Adrenal gland (tissue), 19 donors: ENCODE measurements at regions of chr10 and their contacts with region 1.

Region 1: GRCh38 chr10:96292971-96293920 is 11.0 kb upstream of the DNTT start:
- DNase-seq: peak in 4 of 7 donors; percentile 20 to 31 (median 30)
- H3K4me3 ChIP-seq: no peak overlapping the region
- H3K27ac ChIP-seq: no peak overlapping the region
- H3K4me1 ChIP-seq: no peaks in the 10 kb centered on the region
- H3K27me3 ChIP-seq: no peaks in the 10 kb centered on the region
- CTCF ChIP-seq: peak; percentile 32 to 68 (median 58)
- POLR2A ChIP-seq: no peak

Region 2: DNA sequence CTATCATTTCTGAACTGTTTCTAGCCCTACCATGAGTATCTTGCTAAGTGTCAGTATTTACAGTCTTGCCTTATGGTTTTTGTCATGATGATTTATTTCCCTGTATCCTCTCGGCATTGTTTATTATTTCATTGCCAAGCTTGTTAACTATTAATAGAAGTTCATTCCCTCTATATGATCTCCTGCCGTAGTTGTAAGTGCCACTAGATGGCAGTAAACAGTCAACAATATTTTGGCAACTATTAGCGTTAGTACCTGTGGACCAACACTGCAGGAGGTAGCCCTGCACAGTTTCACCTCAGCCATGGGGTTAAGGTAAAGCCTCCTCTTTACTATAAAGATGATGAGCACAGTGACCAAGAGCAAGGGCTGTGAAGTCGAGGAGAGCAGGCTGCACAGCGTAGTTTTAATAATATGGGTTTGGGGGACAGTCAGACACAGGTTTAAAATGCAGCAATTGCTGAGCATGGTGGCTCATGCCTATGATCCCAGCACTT is 276.0 kb before region 1 on chr10:
- intact Hi-C with region 1: loop called in 1 of 2 experiments (anchors 5 kb)
- DNase-seq: peak in 5 of 7 donors; percentile 18 to 55 (median 31)
- H3K4me3 ChIP-seq: no peak overlapping the region
- H3K27ac ChIP-seq: no peak overlapping the region
- H3K4me1 ChIP-seq: no peaks in the 10 kb centered on the region
- H3K27me3 ChIP-seq: no peaks in the 10 kb centered on the region
- CTCF ChIP-seq: peak; percentile 55 to 80 (median 70)
- POLR2A ChIP-seq: no peak

Region 3: DNA sequence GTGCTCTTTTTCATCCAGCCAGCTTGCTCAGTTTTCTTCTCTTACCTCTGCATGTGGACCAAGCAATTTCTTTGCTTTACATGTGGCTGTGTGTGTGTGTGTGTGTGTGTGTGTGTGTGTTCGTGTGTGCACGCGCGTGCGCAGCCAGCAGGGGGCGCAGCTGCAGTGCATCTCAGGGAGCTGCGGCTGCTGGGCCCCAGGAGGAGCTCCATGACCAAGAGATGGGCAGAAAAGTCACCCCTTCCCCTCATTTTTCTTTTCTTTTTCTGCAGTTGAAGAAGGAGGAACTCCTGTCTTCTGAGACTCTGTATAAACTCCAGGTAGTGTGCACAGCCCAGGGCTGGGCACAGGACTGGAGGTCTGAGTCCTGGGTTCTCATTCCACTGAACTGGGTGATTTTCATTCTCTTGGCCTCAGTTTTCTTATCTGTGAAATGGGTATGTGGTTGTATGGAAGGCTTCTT is 63.6 kb before region 1 on chr10:
- intact Hi-C with region 1: loop called in 1 of 2 experiments (anchors 2 kb)
- DNase-seq: peak; percentile 75 to 86 (median 76)
- H3K4me3 ChIP-seq: no peak overlapping the region
- H3K27ac ChIP-seq: no peak overlapping the region
- H3K4me1 ChIP-seq: no peaks in the 10 kb centered on the region
- H3K27me3 ChIP-seq: no peaks in the 10 kb centered on the region
- CTCF ChIP-seq: peak; percentile 58 to 99 (median 83)
- POLR2A ChIP-seq: peak in 1 of 2 donors; percentile 17